A549 (cell line): ENCODE measurements at regions of chr2 and their contacts with region 1.

Region 1: GRCh38 chr2:151051574-151052220 is 210.0 kb downstream of the RBM43 start:
- DNase-seq: peak; percentile 31 to 49
- ATAC-seq: peak in 1 of 2 experiments; percentile 80; a peak in 3 of 6 replicates
- H3K4me3 ChIP-seq: no peak overlapping the region
- H3K27ac ChIP-seq: no peak overlapping the region
- H3K4me1 ChIP-seq: 0 out of 3 replicates have a peak, but pooled peaks cover 7% of the 10 kb centered on the region
- CTCF ChIP-seq: peak; percentile 77
- EP300 ChIP-seq: no peak
- POLR2A ChIP-seq: no peak
- RAD21 ChIP-seq: peak; percentile 68 to 75

Region 2: GRCh38 chr2:150735894-150736498 is 315.7 kb before region 1 on chr2:
- CTCF ChIA-PET with region 1: no interaction called
- POLR2A ChIA-PET with region 1: no interaction called
- DNase-seq: no peak
- ATAC-seq: no peak
- H3K4me3 ChIP-seq: no peak overlapping the region
- H3K27ac ChIP-seq: no peak overlapping the region
- H3K4me1 ChIP-seq: no peaks in the 10 kb centered on the region
- CTCF ChIP-seq: no peak
- EP300 ChIP-seq: no peak
- POLR2A ChIP-seq: no peak
- RAD21 ChIP-seq: no peak

Region 3: DNA sequence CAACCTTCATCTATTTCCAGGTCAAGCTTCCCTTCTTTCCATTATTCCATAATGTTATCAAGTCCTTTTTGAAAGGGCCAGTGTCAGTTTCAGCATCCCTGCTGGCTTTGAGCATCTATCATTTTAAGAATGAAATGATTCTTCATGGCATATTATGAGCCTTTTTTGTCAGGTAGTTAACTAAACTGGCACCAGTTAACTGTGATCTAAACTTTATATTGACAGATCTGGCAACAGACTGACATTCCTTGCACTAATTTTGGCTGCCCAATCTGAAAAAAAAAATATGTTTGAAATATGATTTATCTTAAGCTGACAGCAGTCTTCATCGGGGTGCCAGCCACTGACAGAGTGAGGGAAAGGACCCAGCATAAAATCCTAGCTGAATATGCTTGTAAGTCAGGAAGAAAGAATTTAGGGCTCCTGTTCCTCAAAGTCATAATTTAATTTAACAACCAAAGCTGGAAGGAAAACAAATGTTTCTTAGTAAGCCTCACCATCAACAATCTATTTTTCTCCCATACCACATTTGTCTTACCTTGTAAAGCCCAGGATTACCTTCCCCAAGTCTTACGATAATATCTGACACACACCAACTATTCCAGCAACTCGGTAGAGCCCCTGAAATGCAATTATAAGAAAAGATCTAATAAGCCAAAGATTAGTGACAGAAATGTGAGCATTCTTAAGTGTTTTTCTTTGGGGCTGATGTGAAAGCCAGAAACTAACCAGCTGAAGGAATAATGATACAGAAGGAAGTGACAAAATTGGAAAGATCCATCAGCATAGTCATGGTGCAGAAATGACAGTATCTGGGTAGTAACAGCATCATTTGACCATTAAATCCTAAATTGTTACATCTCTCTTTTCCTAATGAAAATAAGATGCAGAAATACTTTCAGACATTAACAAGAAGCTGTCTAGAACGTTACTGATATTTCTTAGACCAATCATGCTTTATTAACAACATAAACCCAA is 18.1 kb before region 1 on chr2:
- CTCF ChIA-PET with region 1: interaction called, 15 read pairs
- POLR2A ChIA-PET with region 1: no interaction called
- DNase-seq: no peak
- ATAC-seq: no peak
- H3K4me3 ChIP-seq: no peak overlapping the region
- H3K27ac ChIP-seq: no peak overlapping the region
- H3K4me1 ChIP-seq: no peaks in the 10 kb centered on the region
- CTCF ChIP-seq: no peak
- EP300 ChIP-seq: no peak
- POLR2A ChIP-seq: no peak
- RAD21 ChIP-seq: no peak

Region 4: GRCh38 chr2:151409601-151410484 is 358.1 kb after region 1 on chr2 and contains the start of gene RIF1:
- CTCF ChIA-PET with region 1: no interaction called
- POLR2A ChIA-PET with region 1: no interaction called
- DNase-seq: peak; percentile 85 to 97
- ATAC-seq: peak; percentile 97 to 98
- H3K4me3 ChIP-seq: peak within 1 kb of the TSS; percentile 58
- H3K27ac ChIP-seq: peak within 1 kb of the TSS; percentile 94 to 96
- H3K4me1 ChIP-seq: peaks cover 8% of the 10 kb centered on the region
- CTCF ChIP-seq: peak; percentile 43; the same call in 2 of the 3 replicates
- EP300 ChIP-seq: no peak
- POLR2A ChIP-seq: peak; percentile 57
- RAD21 ChIP-seq: peak in 1 of 2 experiments; percentile 24; a peak in 2 of 5 replicates
- polyA plus RNA-seq, gene RIF1: 24.7 and 28.7 TPM in 2 replicates